Activated CD4-positive, alpha-beta memory T cell treated with anti-CD3 and anti-CD28 coated beads for 36 hours (primary cell): ENCODE measurements at regions of chr11 and their contacts with region 1.

Region 1: GRCh38 chr11:83156150-83156995 is 558 bp upstream of the PCF11 start:
- DNase-seq: peak; percentile 99
- H3K4me3 Mint-ChIP-seq: peak overlapping the region; percentile 100
- H3K27ac Mint-ChIP-seq: peak overlapping the region; percentile 100
- H3K4me1 Mint-ChIP-seq: peaks cover 20% of the 10 kb centered on the region
- H3K27me3 Mint-ChIP-seq: no peaks in the 10 kb centered on the region

Region 2: GRCh38 chr11:82906244-82906654 is 250.1 kb before region 1 on chr11:
- CTCF ChIA-PET with region 1: interaction called, 7 read pairs
- POLR2A ChIA-PET with region 1: interaction called, 67 read pairs
- intact Hi-C with region 1: loop called (anchors 1 kb)
- DNase-seq: no peak
- H3K4me3 Mint-ChIP-seq: no peak overlapping the region
- H3K27ac Mint-ChIP-seq: no peak overlapping the region
- H3K4me1 Mint-ChIP-seq: peaks cover 38% of the 10 kb centered on the region
- H3K27me3 Mint-ChIP-seq: no peaks in the 10 kb centered on the region

Region 3: DNA sequence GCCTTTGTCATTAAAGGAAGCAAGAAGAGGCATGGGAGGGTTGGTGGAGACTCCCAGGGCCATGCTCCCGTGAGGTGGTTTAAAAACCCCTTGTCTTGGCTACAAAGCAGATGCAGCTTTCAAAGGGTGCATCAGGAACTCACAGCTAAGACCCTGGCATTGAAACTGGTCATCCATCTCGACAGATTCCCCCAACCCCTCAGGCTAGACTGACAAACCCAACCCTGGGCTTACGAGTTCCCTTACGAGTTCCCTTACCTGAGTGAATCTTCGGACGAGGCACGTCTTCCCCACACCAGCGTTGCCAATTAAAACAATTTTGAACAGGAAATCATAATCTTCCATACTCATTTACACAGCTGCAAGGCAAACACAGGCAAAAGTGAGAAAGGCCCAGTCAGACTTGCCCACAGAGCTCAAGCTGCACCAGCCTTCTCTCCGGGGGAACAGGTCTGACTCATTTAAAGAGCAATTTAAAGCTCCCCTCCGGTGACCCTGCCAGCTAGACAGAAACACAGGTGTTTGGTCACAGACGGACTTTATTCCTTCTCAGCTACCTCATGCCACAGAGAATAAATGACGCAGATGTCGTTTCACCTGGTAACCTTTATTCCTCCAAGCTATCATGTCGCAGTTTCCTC is 159.3 kb before region 1 on chr11:
- CTCF ChIA-PET with region 1: no interaction called
- POLR2A ChIA-PET with region 1: interaction called, 5 read pairs
- intact Hi-C with region 1: loop called (anchors 2 kb)
- DNase-seq: peak; percentile 67
- H3K4me3 Mint-ChIP-seq: no peak overlapping the region
- H3K27ac Mint-ChIP-seq: peak overlapping the region; percentile 43
- H3K4me1 Mint-ChIP-seq: peaks cover 60% of the 10 kb centered on the region
- H3K27me3 Mint-ChIP-seq: no peaks in the 10 kb centered on the region

Region 4: DNA sequence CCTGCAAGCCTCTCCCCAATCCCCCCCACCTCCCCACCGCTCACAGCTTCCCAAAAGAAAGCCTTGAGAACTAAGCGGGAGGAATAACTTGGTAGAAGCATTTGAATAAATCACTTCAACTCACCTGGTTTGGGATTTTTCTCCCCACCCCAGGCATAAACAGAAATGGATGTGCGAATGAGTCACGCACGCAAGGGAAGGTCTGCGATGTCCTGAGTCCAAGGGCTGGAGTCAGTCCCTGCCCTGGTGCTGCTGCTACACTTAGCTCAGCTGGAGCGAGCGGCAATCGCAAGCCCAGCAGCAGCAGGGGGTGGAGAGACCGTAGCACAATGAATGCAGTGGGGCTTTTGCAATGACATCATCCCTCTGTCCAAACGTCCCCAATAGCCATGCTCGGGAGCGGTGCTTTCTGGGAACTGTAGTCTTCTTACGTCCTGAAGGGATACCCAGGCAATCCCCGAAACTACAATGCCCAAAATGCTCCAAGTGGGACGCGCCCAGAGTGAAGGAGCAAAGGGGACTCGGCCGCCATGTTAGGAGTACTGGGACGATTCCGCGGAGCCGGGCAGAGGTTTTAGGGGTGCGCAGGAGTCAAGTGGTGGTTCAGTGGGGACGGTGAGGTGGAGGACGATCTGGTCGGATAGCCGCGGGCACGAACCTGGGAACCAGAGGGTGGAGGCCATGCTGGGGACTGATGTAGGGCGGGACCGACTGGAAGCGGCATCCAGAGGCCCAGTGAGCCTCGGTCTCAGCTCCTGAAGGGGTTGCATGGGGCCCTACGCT is 84.6 kb before region 1 on chr11 and contains the start of gene RAB30:
- CTCF ChIA-PET with region 1: interaction called, 5 read pairs
- POLR2A ChIA-PET with region 1: interaction called, 45 read pairs
- intact Hi-C with region 1: loop called (anchors 1 kb)
- DNase-seq: peak; percentile 96
- H3K4me3 Mint-ChIP-seq: no peak within 1 kb of the TSS
- H3K27ac Mint-ChIP-seq: no peak within 1 kb of the TSS
- H3K4me1 Mint-ChIP-seq: peaks cover 29% of the 10 kb centered on the region
- H3K27me3 Mint-ChIP-seq: no peaks in the 10 kb centered on the region
- total RNA-seq, gene RAB30: 11.5 to 12.9 TPM

Region 5: GRCh38 chr11:83193315-83194280 is 37.2 kb after region 1 on chr11 and contains the start of gene ANKRD42:
- CTCF ChIA-PET with region 1: interaction called, 3 read pairs
- POLR2A ChIA-PET with region 1: interaction called, 30 read pairs
- intact Hi-C with region 1: loop called (anchors 1 kb)
- DNase-seq: peak; percentile 93
- H3K4me3 Mint-ChIP-seq: peak within 1 kb of the TSS; percentile 99
- H3K27ac Mint-ChIP-seq: peak within 1 kb of the TSS; percentile 98
- H3K4me1 Mint-ChIP-seq: peaks cover 38% of the 10 kb centered on the region
- H3K27me3 Mint-ChIP-seq: no peaks in the 10 kb centered on the region
- total RNA-seq, gene ANKRD42: 3.8 to 5.4 TPM

Region 6: GRCh38 chr11:83272627-83273026 is 116.3 kb after region 1 on chr11:
- CTCF ChIA-PET with region 1: no interaction called
- POLR2A ChIA-PET with region 1: no interaction called
- intact Hi-C with region 1: no loop called
- DNase-seq: no peak
- H3K4me3 Mint-ChIP-seq: no peak overlapping the region
- H3K27ac Mint-ChIP-seq: no peak overlapping the region
- H3K4me1 Mint-ChIP-seq: peaks cover 19% of the 10 kb centered on the region
- H3K27me3 Mint-ChIP-seq: no peaks in the 10 kb centered on the region